CD4-positive, alpha-beta memory T cell (primary cell): ENCODE measurements at regions of chr1 and their contacts with region 1.

Region 1: DNA sequence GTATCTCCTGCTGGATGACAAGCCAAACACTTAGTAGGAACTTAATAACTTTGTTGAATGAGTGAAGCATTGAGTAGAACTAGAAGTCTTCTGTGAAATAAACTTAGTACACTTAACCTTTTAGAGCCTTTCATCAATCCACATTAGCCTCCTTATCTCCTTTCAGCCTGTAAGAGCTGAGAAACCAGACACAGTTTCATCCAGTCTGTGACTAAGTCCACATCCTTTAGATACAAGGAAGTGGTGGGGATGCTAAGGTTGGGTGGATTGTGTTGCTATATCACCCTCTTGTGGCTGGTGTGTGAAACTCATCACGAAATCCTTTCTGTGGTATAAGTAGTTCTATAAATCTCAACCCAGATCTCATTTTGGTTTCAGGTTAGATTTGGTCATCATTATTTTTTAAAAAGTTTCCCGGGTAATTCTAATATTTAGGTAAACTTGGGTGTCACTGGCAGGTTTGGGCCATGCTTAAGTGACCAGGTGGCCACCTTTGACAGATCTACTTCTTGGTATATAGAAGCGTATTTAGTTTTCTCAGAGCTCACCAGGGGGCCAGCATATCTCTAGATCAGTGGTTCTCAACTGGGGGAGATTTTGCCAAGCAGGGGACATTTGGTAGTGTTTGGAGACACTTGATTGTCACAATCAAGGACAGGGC is 27.8 kb upstream of the CD84 start:
- DNase-seq: peak; percentile 79 to 85 (median 81)
- H3K4me3 ChIP-seq: no peak overlapping the region
- H3K4me3 Mint-ChIP-seq: peak overlapping the region in 6 of 8 donors; percentile 3 to 68 (median 37)
- H3K27ac ChIP-seq: peak overlapping the region; percentile 42
- H3K27ac Mint-ChIP-seq: peak overlapping the region; percentile 62 to 93 (median 79)
- H3K4me1 ChIP-seq: peaks cover 56% of the 10 kb centered on the region
- H3K4me1 Mint-ChIP-seq: peaks cover 42 to 62% (median 52%) of the 10 kb centered on the region in 4 donors
- H3K27me3 ChIP-seq: no peaks in the 10 kb centered on the region
- H3K27me3 Mint-ChIP-seq: no peaks in the 10 kb centered on the region

Region 2: DNA sequence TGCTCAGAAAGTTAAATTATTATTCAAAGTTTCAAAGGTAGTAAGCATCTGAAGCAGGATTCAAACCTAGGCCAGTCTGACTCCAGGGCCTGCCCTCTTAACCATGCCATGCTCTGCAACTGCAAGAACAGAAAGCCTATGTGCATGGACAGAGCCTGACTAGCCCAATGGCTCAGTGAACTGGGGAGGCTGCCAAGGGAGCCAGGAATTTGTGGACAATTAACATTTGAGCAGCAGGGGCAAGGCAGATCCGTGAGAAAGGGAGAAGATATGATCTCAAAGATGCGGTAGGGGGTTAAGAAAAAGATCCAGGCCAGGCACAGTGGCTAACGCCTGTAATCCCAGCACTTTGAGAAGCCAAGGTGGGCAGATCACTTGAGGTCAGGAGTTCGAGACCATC is 462.2 kb before region 1 on chr1:
- CTCF ChIA-PET with region 1: no interaction called
- POLR2A ChIA-PET with region 1: no interaction called
- intact Hi-C with region 1: no loop called
- DNase-seq: no peak
- H3K4me3 ChIP-seq: no peak overlapping the region
- H3K4me3 Mint-ChIP-seq: no peak overlapping the region
- H3K27ac ChIP-seq: no peak overlapping the region
- H3K27ac Mint-ChIP-seq: no peak overlapping the region
- H3K4me1 ChIP-seq: no peaks in the 10 kb centered on the region
- H3K4me1 Mint-ChIP-seq: no peaks in the 10 kb centered on the region
- H3K27me3 ChIP-seq: no peaks in the 10 kb centered on the region
- H3K27me3 Mint-ChIP-seq: peaks cover 11 to 23% of the 10 kb centered on the region in 2 donors

Region 3: GRCh38 chr1:160193091-160193819 is 413.9 kb before region 1 on chr1:
- CTCF ChIA-PET with region 1: no interaction called
- POLR2A ChIA-PET with region 1: no interaction called
- intact Hi-C with region 1: loop called (anchors 10 kb)
- DNase-seq: peak; percentile 67 to 75 (median 68)
- H3K4me3 ChIP-seq: no peak overlapping the region
- H3K4me3 Mint-ChIP-seq: no peak overlapping the region
- H3K27ac ChIP-seq: no peak overlapping the region
- H3K27ac Mint-ChIP-seq: no peak overlapping the region
- H3K4me1 ChIP-seq: peaks cover 9% of the 10 kb centered on the region
- H3K4me1 Mint-ChIP-seq: no peaks in the 10 kb centered on the region
- H3K27me3 ChIP-seq: no peaks in the 10 kb centered on the region
- H3K27me3 Mint-ChIP-seq: peaks cover 1 to 3% of the 10 kb centered on the region in 2 donors

Region 4: DNA sequence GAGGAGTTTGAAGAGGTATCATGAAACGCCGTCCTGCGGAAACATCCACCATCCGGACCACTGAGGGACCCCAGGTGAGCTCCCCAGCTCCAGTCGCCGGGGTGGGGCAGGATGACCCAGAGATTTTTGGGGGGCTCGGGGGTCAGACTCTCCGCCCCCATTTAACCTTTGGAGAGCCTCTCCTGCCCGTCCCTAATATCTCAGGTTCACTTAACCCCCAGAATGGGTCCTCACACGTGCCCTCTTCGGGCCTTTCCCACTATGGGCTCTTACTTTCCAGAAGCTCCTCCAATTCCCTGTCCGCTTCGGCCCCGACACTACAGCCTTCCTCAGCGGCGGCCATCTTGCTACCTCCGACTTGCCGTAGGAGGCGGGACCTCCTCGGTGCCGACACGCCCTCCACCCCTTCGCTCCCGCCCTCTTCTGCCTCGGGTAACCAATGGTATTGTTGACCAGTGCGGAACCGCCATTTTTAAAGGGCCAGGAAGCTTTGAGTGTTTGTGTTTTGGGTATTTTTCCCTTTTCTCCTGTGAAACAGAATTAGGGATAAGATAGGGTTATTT is 322.3 kb before region 1 on chr1 and contains the start of gene PEX19:
- CTCF ChIA-PET with region 1: no interaction called
- POLR2A ChIA-PET with region 1: no interaction called
- intact Hi-C with region 1: no loop called
- DNase-seq: peak; percentile 90 to 95 (median 92)
- H3K4me3 ChIP-seq: peak within 1 kb of the TSS; percentile 53 to 98
- H3K4me3 Mint-ChIP-seq: peak within 1 kb of the TSS; percentile 98 to 100 (median 99)
- H3K27ac ChIP-seq: peak within 1 kb of the TSS; percentile 81
- H3K27ac Mint-ChIP-seq: peak within 1 kb of the TSS; percentile 71 to 99 (median 98)
- H3K4me1 ChIP-seq: peaks cover 24% of the 10 kb centered on the region
- H3K4me1 Mint-ChIP-seq: peaks cover 20 to 44% (median 28%) of the 10 kb centered on the region in 4 donors
- H3K27me3 ChIP-seq: no peaks in the 10 kb centered on the region
- H3K27me3 Mint-ChIP-seq: no peaks in the 10 kb centered on the region
- total RNA-seq, gene PEX19: 53.5 to 60.6 TPM

Region 5: GRCh38 chr1:160342953-160343869 is 263.9 kb before region 1 on chr1 and contains the starts of genes COPA and NCSTN:
- CTCF ChIA-PET with region 1: interaction called, 3 read pairs
- POLR2A ChIA-PET with region 1: no interaction called
- intact Hi-C with region 1: loop called (anchors 2 kb)
- DNase-seq: peak; percentile 89 to 95 (median 89)
- H3K4me3 ChIP-seq: peak within 1 kb of the TSS; percentile 77 to 96
- H3K4me3 Mint-ChIP-seq: peak within 1 kb of the TSS; percentile 99 to 100 (median 100)
- H3K27ac ChIP-seq: peak within 1 kb of the TSS; percentile 94
- H3K27ac Mint-ChIP-seq: peak within 1 kb of the TSS; percentile 96 to 100 (median 100)
- H3K4me1 ChIP-seq: peaks cover 44% of the 10 kb centered on the region
- H3K4me1 Mint-ChIP-seq: peaks cover 35 to 67% (median 49%) of the 10 kb centered on the region in 4 donors
- H3K27me3 ChIP-seq: no peaks in the 10 kb centered on the region
- H3K27me3 Mint-ChIP-seq: no peaks in the 10 kb centered on the region
- total RNA-seq, gene COPA: 128 to 132 TPM
- total RNA-seq, gene NCSTN: 62.2 to 68.0 TPM

Region 6: DNA sequence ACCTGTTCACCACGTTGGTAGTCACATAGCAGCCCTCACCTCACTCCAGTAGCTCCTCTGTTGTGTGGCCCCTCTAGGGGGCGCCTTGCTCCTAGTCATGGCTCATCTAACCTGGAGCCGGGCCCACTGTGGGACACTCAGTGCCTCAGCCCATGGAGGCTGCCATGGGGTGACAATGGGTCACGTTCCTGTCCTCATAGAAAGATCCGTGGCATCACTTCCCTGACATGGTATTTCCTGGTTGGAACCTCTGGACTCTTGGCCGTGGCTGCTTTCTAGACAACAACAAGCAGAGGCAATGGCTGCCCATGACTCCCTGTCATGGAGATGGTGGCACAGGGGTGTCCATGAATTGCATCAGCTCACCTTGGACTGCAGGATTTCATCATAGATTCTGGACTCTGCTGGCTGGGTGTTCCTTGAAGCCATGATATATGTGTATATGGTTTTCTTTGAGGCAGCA is 56.5 kb before region 1 on chr1:
- CTCF ChIA-PET with region 1: interaction called, 359 read pairs
- POLR2A ChIA-PET with region 1: interaction called, 21 read pairs
- intact Hi-C with region 1: loop called (anchors 1 kb)
- DNase-seq: peak in 4 of 5 donors; percentile 43 to 54 (median 46)
- H3K4me3 ChIP-seq: no peak overlapping the region
- H3K4me3 Mint-ChIP-seq: peak overlapping the region in 1 of 8 donors; percentile 36
- H3K27ac ChIP-seq: no peak overlapping the region
- H3K27ac Mint-ChIP-seq: peak overlapping the region in 5 of 7 donors; percentile 27 to 77 (median 64)
- H3K4me1 ChIP-seq: peaks cover 36% of the 10 kb centered on the region
- H3K4me1 Mint-ChIP-seq: peaks cover 16 to 40% (median 27%) of the 10 kb centered on the region in 4 donors
- H3K27me3 ChIP-seq: no peaks in the 10 kb centered on the region
- H3K27me3 Mint-ChIP-seq: no peaks in the 10 kb centered on the region

Region 7: DNA sequence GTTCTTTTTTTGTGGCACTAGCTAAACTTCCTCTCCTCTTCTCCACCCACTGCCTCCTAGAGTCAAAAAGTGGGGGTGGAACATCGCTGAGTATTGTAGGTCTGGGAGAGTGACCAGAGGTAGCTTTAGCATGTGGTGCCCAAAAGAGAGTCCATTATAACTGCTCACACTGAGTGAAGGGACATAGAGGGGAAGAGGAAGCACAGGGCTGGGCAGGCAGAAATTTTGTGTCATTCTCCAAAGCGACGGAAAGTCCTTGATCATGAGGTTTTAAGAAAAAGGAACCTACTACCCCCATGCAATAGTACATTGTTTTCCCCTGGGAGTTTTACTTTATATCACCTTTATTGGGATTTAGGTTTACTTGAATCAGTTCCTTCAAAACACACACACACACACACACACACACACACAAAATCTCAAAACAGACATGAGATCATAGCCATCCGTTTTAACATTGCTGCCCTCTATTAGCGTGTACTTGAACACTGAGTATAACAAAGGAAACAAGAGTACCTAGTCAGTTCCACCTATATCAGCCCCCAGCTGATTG is 32.0 kb before region 1 on chr1:
- CTCF ChIA-PET with region 1: interaction called, 10 read pairs
- POLR2A ChIA-PET with region 1: interaction called, 54 read pairs
- intact Hi-C with region 1: no loop called
- DNase-seq: peak in 2 of 5 donors; percentile 26 to 49
- H3K4me3 ChIP-seq: peak overlapping the region; percentile 15 to 80
- H3K4me3 Mint-ChIP-seq: peak overlapping the region; percentile 83 to 98 (median 94)
- H3K27ac ChIP-seq: peak overlapping the region; percentile 68
- H3K27ac Mint-ChIP-seq: peak overlapping the region; percentile 89 to 95 (median 92)
- H3K4me1 ChIP-seq: peaks cover 83% of the 10 kb centered on the region
- H3K4me1 Mint-ChIP-seq: peaks cover 64 to 94% (median 73%) of the 10 kb centered on the region in 4 donors
- H3K27me3 ChIP-seq: no peaks in the 10 kb centered on the region
- H3K27me3 Mint-ChIP-seq: no peaks in the 10 kb centered on the region

Region 8: DNA sequence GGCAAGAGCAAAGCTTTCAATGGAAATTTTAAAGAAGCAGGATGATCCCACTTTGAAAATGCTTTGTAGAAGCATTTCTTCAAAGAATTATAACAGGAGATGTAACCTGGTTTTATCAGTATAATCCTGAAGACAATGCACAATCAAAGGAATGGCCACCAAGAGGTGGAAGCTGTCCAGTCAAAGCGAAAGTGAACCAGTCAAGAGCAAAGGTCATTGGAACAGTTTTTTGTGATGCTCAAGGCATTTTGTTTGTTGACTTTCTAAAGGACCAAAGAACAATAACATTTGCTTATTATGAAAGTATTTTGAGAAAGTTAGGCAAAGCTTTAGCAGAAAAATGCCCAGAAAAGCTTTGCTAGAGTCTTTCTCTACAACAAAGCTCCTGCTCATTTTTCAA is 22.4 kb before region 1 on chr1:
- CTCF ChIA-PET with region 1: interaction called, 26 read pairs
- POLR2A ChIA-PET with region 1: interaction called, 4 read pairs
- intact Hi-C with region 1: no loop called
- DNase-seq: no peak
- H3K4me3 ChIP-seq: no peak overlapping the region
- H3K4me3 Mint-ChIP-seq: peak overlapping the region in 7 of 8 donors; percentile 39 to 79 (median 60)
- H3K27ac ChIP-seq: no peak overlapping the region
- H3K27ac Mint-ChIP-seq: peak overlapping the region in 4 of 7 donors; percentile 72 to 89 (median 80)
- H3K4me1 ChIP-seq: peaks cover 37% of the 10 kb centered on the region
- H3K4me1 Mint-ChIP-seq: peaks cover 46 to 76% (median 53%) of the 10 kb centered on the region in 4 donors
- H3K27me3 ChIP-seq: no peaks in the 10 kb centered on the region
- H3K27me3 Mint-ChIP-seq: no peaks in the 10 kb centered on the region

Region 9: DNA sequence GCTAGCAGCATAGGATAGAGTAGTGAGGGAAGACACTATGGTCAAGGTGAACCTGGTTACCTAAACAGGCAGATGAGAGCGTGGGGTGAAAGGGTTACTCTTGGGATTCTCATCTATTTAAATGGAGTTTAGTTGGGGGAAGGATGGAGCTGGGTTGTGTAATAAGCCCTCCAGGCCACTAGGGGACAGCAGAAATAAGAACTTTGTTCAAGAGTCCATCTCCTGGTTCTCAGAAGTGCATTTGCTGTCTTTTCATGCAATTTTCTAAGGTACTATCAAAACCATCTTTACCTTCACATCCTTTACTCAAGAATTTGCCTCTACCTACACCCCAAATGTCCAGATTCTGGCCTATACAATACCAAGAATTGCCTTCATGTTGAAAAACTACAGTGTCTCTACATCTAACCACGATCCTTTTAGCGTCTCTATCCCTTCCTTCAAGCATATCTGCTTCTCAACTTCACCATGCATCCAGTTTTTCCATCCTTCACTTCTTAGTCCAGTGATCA is 11.7 kb after region 1 on chr1:
- CTCF ChIA-PET with region 1: interaction called, 31 read pairs
- POLR2A ChIA-PET with region 1: interaction called, 5 read pairs
- intact Hi-C with region 1: no loop called
- DNase-seq: peak; percentile 52 to 58 (median 55)
- H3K4me3 ChIP-seq: no peak overlapping the region
- H3K4me3 Mint-ChIP-seq: peak overlapping the region in 5 of 8 donors; percentile 4 to 41 (median 23)
- H3K27ac ChIP-seq: no peak overlapping the region
- H3K27ac Mint-ChIP-seq: peak overlapping the region; percentile 61 to 94 (median 84)
- H3K4me1 ChIP-seq: peaks cover 86% of the 10 kb centered on the region
- H3K4me1 Mint-ChIP-seq: peaks cover 53 to 86% (median 69%) of the 10 kb centered on the region in 4 donors
- H3K27me3 ChIP-seq: no peaks in the 10 kb centered on the region
- H3K27me3 Mint-ChIP-seq: no peaks in the 10 kb centered on the region

Region 10: DNA sequence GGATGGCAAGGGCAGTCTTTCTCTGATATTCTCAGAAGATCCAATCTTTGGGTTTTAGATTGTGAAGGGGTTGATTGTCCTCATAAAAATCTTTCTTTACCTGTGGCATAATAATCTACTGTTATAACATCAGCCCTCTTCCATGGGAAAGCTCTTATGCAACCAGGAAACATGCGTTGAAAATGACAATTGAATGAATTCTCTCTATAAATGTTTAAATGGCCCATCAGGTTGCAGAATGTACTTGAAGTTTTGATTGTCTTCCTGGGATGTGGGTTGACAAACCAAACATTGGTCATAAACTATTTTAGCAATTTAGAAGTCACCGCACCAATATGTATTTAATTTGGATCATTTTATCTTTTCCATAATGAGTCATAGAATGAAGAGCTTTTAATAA is 309.5 kb after region 1 on chr1:
- CTCF ChIA-PET with region 1: no interaction called
- POLR2A ChIA-PET with region 1: no interaction called
- intact Hi-C with region 1: no loop called
- DNase-seq: no peak
- H3K4me3 ChIP-seq: no peak overlapping the region
- H3K4me3 Mint-ChIP-seq: no peak overlapping the region
- H3K27ac ChIP-seq: no peak overlapping the region
- H3K27ac Mint-ChIP-seq: no peak overlapping the region
- H3K4me1 ChIP-seq: no peaks in the 10 kb centered on the region
- H3K4me1 Mint-ChIP-seq: no peaks in the 10 kb centered on the region
- H3K27me3 ChIP-seq: no peaks in the 10 kb centered on the region
- H3K27me3 Mint-ChIP-seq: peaks cover 9 to 11% of the 10 kb centered on the region in 2 donors